A673 (cell line): ENCODE measurements at regions of chr20 and their contacts with region 1.

Region 1: GRCh38 chr20:50478162-50479036 is 31.8 kb upstream of the PTPN1 start:
- DNase-seq: peak; percentile 91
- H3K4me3 ChIP-seq: no peak overlapping the region
- H3K27ac ChIP-seq: no peak overlapping the region
- H3K4me1 ChIP-seq: no peaks in the 10 kb centered on the region
- H3K27me3 ChIP-seq: no peaks in the 10 kb centered on the region
- CTCF ChIP-seq: peak; percentile 85

Region 2: DNA sequence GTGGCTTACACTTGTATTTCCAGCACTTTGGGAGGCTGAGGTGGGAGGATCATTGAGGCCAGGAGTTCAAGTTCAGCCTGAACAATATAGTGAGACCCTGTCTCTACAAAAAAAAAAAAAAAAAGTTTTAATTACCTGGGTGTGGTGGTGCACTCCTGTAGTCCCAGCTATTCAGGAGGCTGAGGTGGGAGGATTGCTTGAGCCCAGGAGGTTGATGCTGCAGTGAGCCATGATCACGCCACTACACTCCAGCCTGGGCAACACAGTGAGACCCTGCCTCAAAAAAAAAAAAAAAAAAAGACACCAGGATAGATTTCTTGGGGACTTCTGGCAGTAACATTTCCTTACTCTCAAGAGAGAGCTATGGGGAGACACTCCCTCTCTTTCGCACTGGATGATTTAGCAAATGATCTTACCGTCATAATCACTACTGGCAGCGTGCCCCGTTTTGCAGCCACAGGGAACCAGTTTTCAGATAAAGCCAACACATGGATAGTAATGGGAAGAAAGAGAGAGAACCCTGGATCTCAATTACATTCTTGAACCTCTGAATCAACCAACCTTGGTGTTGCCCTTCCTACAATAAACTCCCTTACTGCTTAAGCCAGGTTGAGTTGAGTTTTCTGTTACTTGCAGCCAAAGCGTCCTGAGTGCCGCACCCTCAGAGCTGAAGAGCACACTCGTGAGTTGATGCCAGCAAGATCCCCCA is 13.7 kb after region 1 on chr20:
- CTCF ChIA-PET with region 1: interaction called, 13 read pairs
- POLR2A ChIA-PET with region 1: no interaction called
- intact Hi-C with region 1: no loop called
- DNase-seq: peak; percentile 79
- H3K4me3 ChIP-seq: no peak overlapping the region
- H3K27ac ChIP-seq: no peak overlapping the region
- H3K4me1 ChIP-seq: peaks cover 7% of the 10 kb centered on the region
- H3K27me3 ChIP-seq: no peaks in the 10 kb centered on the region
- CTCF ChIP-seq: no peak

Region 3: GRCh38 chr20:50575847-50576720 is 97.7 kb after region 1 on chr20:
- CTCF ChIA-PET with region 1: interaction called, 11 read pairs
- POLR2A ChIA-PET with region 1: no interaction called
- intact Hi-C with region 1: loop called (anchors 5 kb)
- DNase-seq: peak; percentile 72
- H3K4me3 ChIP-seq: no peak overlapping the region
- H3K27ac ChIP-seq: no peak overlapping the region
- H3K4me1 ChIP-seq: peaks cover 34% of the 10 kb centered on the region
- H3K27me3 ChIP-seq: no peaks in the 10 kb centered on the region
- CTCF ChIP-seq: peak; percentile 85

Region 4: DNA sequence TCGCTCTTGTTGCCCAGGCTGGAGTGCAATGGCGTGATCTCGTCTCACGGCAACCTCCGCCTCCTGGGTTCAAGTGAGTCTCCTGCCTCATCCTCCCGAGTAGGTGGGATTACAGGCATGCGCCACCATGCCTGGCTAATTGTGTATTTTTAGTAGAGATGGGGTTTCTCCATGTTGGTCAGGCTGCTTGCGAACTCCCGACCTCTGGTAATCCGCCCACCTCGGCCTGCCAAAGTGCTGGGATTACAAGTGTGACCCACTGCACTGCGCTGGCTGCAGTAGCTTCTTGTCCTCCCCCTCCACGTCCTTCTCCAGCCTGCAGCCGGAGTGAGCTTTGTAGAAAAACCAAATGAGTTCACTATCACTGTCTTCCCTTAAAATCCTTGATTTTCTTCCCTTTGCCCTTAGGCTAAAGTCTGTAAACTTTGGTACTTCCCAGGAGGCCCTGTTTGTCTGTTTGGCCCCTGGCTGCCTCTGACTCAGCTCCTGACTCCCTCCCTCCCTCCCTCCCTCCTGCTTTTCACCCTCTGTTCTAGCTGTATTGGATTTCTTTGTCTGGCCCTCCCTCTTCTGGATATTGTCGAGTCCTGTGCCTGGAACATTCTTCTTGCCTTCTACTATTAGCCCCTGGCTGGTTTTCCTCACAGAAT is 265.9 kb after region 1 on chr20:
- CTCF ChIA-PET with region 1: interaction called, 3 read pairs
- POLR2A ChIA-PET with region 1: interaction called, 17 read pairs
- intact Hi-C with region 1: no loop called
- DNase-seq: peak; percentile 86
- H3K4me3 ChIP-seq: no peak overlapping the region
- H3K27ac ChIP-seq: peak overlapping the region; percentile 51
- H3K4me1 ChIP-seq: peaks cover 54% of the 10 kb centered on the region
- H3K27me3 ChIP-seq: no peaks in the 10 kb centered on the region
- CTCF ChIP-seq: peak; percentile 43; the same call in 1 of the 2 replicates